Mammary epithelial cell (primary cell): ENCODE measurements at regions of chr9 and their contacts with region 1.

Region 1: DNA sequence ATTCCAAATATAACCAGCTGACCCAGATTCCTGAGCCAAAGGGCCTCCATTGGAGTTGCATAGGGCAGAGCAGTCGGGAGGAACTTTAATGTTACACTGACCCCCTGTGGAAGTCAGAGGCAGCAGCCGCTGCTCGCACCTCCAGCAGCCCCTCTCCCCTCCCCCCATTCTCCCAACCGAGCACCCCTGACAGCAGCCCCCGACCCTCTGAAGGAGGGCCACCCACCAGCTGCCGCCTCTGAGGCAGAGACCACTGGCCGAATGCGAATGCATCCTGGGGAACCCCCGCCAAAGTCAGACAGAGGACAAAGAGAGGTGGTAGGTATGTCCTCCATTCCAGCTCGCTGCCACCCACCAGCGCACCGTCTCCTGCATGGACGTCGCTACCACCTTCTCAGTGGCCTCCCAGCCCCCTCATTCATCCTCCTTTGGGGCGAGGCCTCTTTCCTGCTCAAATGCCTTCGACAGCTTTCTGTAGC is 231.0 kb downstream of the CDK5RAP2 start:
- DNase-seq: peak; percentile 11
- H3K4me3 ChIP-seq: no peak overlapping the region
- H3K27ac ChIP-seq: no peak overlapping the region
- H3K4me1 ChIP-seq: peaks cover 5% of the 10 kb centered on the region
- H3K27me3 ChIP-seq: no peaks in the 10 kb centered on the region
- CTCF ChIP-seq: peak; percentile 56 to 79

Region 2: DNA sequence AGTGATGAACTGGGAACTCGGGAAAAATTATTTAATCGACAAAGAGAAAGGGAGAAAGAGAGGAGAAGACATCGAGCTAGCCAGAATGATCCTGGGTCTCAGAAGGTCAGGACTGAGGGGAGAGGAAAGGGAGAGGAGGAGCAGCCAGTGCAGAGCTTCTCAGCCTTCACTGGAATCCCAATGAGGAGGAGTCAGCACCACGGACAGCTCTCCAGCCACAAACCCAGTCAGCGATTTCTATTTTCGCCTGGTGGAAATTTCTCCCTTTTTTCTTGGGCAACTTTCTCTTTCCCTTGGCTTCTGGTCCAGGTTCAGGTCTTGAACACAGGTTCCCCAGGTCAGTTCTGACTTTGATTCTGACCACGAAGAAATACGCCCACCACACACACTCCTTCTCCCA is 978.2 kb before region 1 on chr9:
- CTCF ChIA-PET with region 1: no interaction called
- dilution Hi-C with region 1: no loop called
- in situ Hi-C with region 1: loop called in 1 of 2 experiments (anchors 10 kb)
- intact Hi-C with region 1: loop called (anchors 1 kb)
- DNase-seq: peak; percentile 35
- H3K4me3 ChIP-seq: no peak overlapping the region
- H3K27ac ChIP-seq: no peak overlapping the region
- H3K4me1 ChIP-seq: peaks cover 8% of the 10 kb centered on the region
- H3K27me3 ChIP-seq: peaks cover 9% of the 10 kb centered on the region
- CTCF ChIP-seq: no peak

Region 3: DNA sequence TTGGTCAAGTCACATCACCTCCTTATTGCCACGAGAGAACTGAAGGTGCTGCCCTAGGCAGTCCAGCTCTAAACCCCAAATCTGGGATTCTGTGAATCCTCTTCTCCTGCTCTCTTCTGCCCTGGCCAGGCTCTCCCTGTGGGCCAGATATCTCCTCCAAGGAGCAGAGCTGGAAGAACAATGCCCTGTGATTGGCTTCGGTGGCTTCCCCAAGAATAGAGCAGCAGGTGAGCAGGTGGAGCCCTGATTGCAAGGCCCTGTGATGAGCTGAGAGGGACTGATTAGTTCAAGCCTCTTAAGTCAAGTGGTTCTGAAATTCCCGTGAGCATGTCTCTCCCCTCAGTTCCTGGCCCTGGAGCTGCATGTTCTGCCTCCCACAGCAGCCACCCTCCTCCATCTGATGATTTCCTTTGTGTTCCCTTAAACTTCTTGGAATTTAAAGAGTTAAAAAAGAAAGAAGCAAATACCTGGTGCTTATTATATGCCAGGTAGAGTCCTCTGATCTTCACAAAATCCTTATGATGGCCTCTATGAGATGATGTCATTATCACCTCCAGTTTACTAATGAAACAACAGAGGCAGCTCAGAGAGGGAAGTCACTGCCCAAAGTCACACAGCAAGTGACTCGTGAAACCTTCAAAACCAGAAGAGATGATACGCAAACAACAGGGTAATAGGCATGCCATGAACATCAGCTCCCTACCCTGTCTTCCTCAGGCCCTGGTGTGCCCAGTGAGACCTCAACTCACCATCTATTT is 804.3 kb before region 1 on chr9:
- CTCF ChIA-PET with region 1: no interaction called
- dilution Hi-C with region 1: no loop called
- in situ Hi-C with region 1: loop called in 1 of 2 experiments (anchors 10 kb)
- intact Hi-C with region 1: no loop called
- DNase-seq: no peak
- H3K4me3 ChIP-seq: no peak overlapping the region
- H3K27ac ChIP-seq: no peak overlapping the region
- H3K4me1 ChIP-seq: no peaks in the 10 kb centered on the region
- H3K27me3 ChIP-seq: no peaks in the 10 kb centered on the region
- CTCF ChIP-seq: no peak

Region 4: GRCh38 chr9:119968836-119969707 is 379.9 kb before region 1 on chr9:
- CTCF ChIA-PET with region 1: no interaction called
- dilution Hi-C with region 1: no loop called
- in situ Hi-C with region 1: loop called in 1 of 2 experiments (anchors 10 kb)
- intact Hi-C with region 1: loop called (anchors 1 kb)
- DNase-seq: peak; percentile 45
- H3K4me3 ChIP-seq: no peak overlapping the region
- H3K27ac ChIP-seq: no peak overlapping the region
- H3K4me1 ChIP-seq: peaks cover 4% of the 10 kb centered on the region
- H3K27me3 ChIP-seq: peaks cover 2% of the 10 kb centered on the region
- CTCF ChIP-seq: peak; percentile 96 to 97

Region 5: DNA sequence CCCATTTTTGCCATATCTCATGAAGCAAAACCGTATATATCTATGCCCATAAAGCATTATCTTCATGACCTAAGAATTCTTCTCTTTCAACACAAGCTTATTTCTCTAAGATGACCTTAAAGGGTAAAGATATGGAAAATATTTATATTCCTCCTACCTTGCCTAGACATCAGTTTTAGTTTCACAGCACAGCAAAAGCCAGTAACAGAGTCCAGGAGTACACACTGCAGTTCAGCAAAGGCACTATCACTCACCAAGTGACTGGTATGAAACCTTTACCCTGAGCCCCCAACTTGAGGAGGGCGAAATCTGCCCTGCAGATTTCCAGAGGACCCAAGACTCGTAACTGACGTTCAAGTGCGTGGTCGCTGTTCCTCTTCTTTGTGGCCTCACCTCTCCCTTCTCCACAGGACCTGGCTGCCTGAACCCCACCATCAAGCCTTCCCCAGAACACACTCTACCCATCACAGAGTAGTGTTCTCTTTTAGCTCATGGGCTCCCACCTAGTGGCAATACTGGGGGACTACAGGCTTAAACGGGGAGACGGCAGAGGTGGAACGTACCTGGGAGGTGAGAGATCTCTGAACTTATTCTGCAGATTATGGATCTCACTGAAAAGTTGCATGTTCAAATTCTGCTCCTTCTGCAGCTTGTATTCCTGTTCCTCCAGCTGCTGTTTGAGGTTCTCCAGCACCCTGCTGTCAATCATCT is 90.0 kb after region 1 on chr9:
- CTCF ChIA-PET with region 1: no interaction called
- dilution Hi-C with region 1: no loop called
- in situ Hi-C with region 1: no loop called
- intact Hi-C with region 1: no loop called
- DNase-seq: peak; percentile 9
- H3K4me3 ChIP-seq: no peak overlapping the region
- H3K27ac ChIP-seq: no peak overlapping the region
- H3K4me1 ChIP-seq: no peaks in the 10 kb centered on the region
- H3K27me3 ChIP-seq: no peaks in the 10 kb centered on the region
- CTCF ChIP-seq: peak; percentile 49 to 51

Region 6: GRCh38 chr9:120477521-120478001 is 128.6 kb after region 1 on chr9:
- CTCF ChIA-PET with region 1: no interaction called
- dilution Hi-C with region 1: no loop called
- in situ Hi-C with region 1: no loop called
- intact Hi-C with region 1: loop called (anchors 5 kb)
- DNase-seq: peak; percentile 75
- H3K4me3 ChIP-seq: no peak overlapping the region
- H3K27ac ChIP-seq: no peak overlapping the region
- H3K4me1 ChIP-seq: peaks cover 13% of the 10 kb centered on the region
- H3K27me3 ChIP-seq: no peaks in the 10 kb centered on the region
- CTCF ChIP-seq: peak; percentile 93 to 96